ENCODE measurements at regions of chr1 and their contacts with region 1.

Region 1: DNA sequence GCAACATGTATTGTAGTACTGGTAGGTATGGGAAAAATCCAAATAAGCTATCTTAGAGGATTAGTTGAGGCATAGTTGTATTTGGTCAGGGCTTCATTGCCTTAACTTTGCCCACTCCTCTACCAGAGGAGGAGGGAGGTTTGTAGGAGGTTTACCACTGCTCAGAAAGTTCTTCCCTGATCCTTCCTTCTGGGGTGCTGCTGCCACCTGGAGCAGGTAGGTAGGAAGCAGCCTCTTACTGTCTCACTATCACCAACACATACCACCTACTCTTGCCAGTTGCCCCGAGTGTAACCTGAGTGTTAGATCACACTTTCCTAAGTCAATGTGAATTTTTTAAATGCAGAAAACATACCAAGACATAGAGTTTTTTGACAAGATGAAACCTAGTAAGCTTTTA is 24.1 kb upstream of the ZSWIM5 start:
- DNase-seq: peak in 8 of 14 experiments; percentile 4 to 61 (median 19)
- ATAC-seq: no peak
- H3K4me3 ChIP-seq: no peak overlapping the region
- H3K4me3 Mint-ChIP-seq: no peak overlapping the region
- H3K27ac ChIP-seq: no peak overlapping the region
- H3K27ac Mint-ChIP-seq: no peak overlapping the region
- H3K4me1 ChIP-seq: no peaks in the 10 kb centered on the region
- H3K4me1 Mint-ChIP-seq: no peaks in the 10 kb centered on the region
- H3K27me3 ChIP-seq: no peaks in the 10 kb centered on the region
- H3K27me3 Mint-ChIP-seq: no peaks in the 10 kb centered on the region
- CTCF ChIP-seq: peak; percentile 20

Region 2: GRCh38 chr1:44707959-44708831 is 522.3 kb before region 1 on chr1:
- CTCF ChIA-PET with region 1: no interaction called
- POLR2A ChIA-PET with region 1: no interaction called
- intact Hi-C with region 1: loop called in 1 of 2 experiments (anchors 10 kb)
- DNase-seq: peak in 4 of 14 experiments; percentile 50 to 75 (median 68)
- ATAC-seq: peak; percentile 95
- H3K4me3 ChIP-seq: no peak overlapping the region
- H3K4me3 Mint-ChIP-seq: peak overlapping the region; percentile 1
- H3K27ac ChIP-seq: no peak overlapping the region
- H3K27ac Mint-ChIP-seq: no peak overlapping the region
- H3K4me1 ChIP-seq: peaks cover 10% of the 10 kb centered on the region
- H3K4me1 Mint-ChIP-seq: peaks cover 6% of the 10 kb centered on the region
- H3K27me3 ChIP-seq: no peaks in the 10 kb centered on the region
- H3K27me3 Mint-ChIP-seq: no peaks in the 10 kb centered on the region
- CTCF ChIP-seq: peak; percentile 84

Region 3: GRCh38 chr1:45815667-45816458 is 585.3 kb after region 1 on chr1:
- CTCF ChIA-PET with region 1: no interaction called
- POLR2A ChIA-PET with region 1: no interaction called
- intact Hi-C with region 1: no loop called
- DNase-seq: no peak
- ATAC-seq: no peak
- H3K4me3 ChIP-seq: no peak overlapping the region
- H3K4me3 Mint-ChIP-seq: no peak overlapping the region
- H3K27ac ChIP-seq: no peak overlapping the region
- H3K27ac Mint-ChIP-seq: no peak overlapping the region
- H3K4me1 ChIP-seq: no peaks in the 10 kb centered on the region
- H3K4me1 Mint-ChIP-seq: peaks cover 14% of the 10 kb centered on the region
- H3K27me3 ChIP-seq: no peaks in the 10 kb centered on the region
- H3K27me3 Mint-ChIP-seq: no peaks in the 10 kb centered on the region
- CTCF ChIP-seq: no peak

Region 4: DNA sequence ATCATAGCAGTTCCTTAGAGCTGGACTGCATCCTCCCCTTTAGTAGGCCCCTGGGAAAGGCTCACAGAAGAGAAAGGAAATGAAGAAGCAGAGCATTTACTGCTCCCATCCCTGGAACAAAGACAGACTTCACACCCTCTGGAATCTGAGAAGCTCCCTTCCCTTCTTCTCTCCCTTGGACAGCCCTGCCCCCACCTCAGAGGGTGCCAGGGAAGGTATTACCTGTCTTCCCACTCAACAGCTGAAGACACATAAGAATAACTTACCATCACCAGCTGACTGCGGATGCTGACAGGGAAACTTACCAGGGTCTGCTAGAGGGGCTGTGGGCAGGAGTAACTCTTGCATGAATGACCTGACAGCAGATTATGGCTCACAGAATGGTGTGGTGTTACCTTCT is 1149.5 kb after region 1 on chr1:
- CTCF ChIA-PET with region 1: no interaction called
- POLR2A ChIA-PET with region 1: no interaction called
- intact Hi-C with region 1: no loop called
- DNase-seq: no peak
- ATAC-seq: no peak
- H3K4me3 ChIP-seq: no peak overlapping the region
- H3K4me3 Mint-ChIP-seq: no peak overlapping the region
- H3K27ac ChIP-seq: no peak overlapping the region
- H3K27ac Mint-ChIP-seq: no peak overlapping the region
- H3K4me1 ChIP-seq: no peaks in the 10 kb centered on the region
- H3K4me1 Mint-ChIP-seq: no peaks in the 10 kb centered on the region
- H3K27me3 ChIP-seq: no peaks in the 10 kb centered on the region
- H3K27me3 Mint-ChIP-seq: no peaks in the 10 kb centered on the region
- CTCF ChIP-seq: no peak